ENCODE measurements at regions of chr2 and their contacts with region 1.

Region 1: GRCh38 chr2:193348055-193348454 is 1153.3 kb upstream of the TMEFF2 start:
- DNase-seq: no peak
- ATAC-seq: no peak; the same call in 1 of the 2 replicates
- H3K4me3 ChIP-seq: peak overlapping the region; percentile 62
- H3K27ac ChIP-seq: no peak overlapping the region
- H3K4me1 ChIP-seq: no peaks in the 10 kb centered on the region
- H3K27me3 ChIP-seq: no peaks in the 10 kb centered on the region
- CTCF ChIP-seq: no peak

Region 2: GRCh38 chr2:191950132-191950874 is 1397.8 kb before region 1 on chr2:
- CTCF ChIA-PET with region 1: no interaction called
- POLR2A ChIA-PET with region 1: interaction called, 15 read pairs
- intact Hi-C with region 1: no loop called
- DNase-seq: peak; percentile 36
- ATAC-seq: peak; percentile 45; the same call in 1 of the 2 replicates
- H3K4me3 ChIP-seq: no peak overlapping the region
- H3K27ac ChIP-seq: no peak overlapping the region; the same call in 1 of the 2 replicates
- H3K4me1 ChIP-seq: peaks cover 12% of the 10 kb centered on the region; the same call in 1 of the 2 replicates
- H3K27me3 ChIP-seq: no peaks in the 10 kb centered on the region
- CTCF ChIP-seq: no peak

Region 3: DNA sequence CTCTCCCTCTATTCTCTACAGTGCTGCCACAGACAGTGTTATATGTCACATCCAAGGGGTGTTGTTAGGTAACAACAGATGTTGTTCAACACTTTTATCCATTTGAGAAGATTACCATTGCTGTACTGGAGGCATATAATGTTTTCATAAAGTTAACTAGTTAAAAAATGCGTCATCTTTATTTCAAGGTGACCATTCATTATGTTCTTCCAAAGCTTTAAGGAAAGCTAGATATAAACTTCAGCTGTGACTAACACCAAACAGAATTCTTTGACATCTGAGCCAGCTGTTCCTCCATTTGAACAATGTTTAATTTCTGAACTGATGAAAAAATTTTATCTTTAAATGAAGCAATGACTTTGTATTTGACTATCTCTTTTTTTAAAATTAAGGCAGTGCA is 53.7 kb before region 1 on chr2:
- CTCF ChIA-PET with region 1: no interaction called
- POLR2A ChIA-PET with region 1: no interaction called
- intact Hi-C with region 1: no loop called
- DNase-seq: no peak
- ATAC-seq: no peak
- H3K4me3 ChIP-seq: no peak overlapping the region
- H3K27ac ChIP-seq: no peak overlapping the region
- H3K4me1 ChIP-seq: no peaks in the 10 kb centered on the region
- H3K27me3 ChIP-seq: no peaks in the 10 kb centered on the region
- CTCF ChIP-seq: no peak

Measured in PC-3 (cell line).